ENCODE measurements at regions of chrX and their contacts with region 1.

Region 1: GRCh38 chrX:153927922-153928760 is 2.1 kb upstream of the ARHGAP4 start:
- DNase-seq: peak; percentile 80 to 98 (median 94)
- ATAC-seq: peak; percentile 86
- H3K4me3 ChIP-seq: peak overlapping the region; percentile 81
- H3K4me3 Mint-ChIP-seq: peak overlapping the region; percentile 90 to 98 (median 94)
- H3K27ac ChIP-seq: peak overlapping the region; percentile 98
- H3K27ac Mint-ChIP-seq: peak overlapping the region; percentile 80 to 100 (median 98)
- H3K4me1 ChIP-seq: peaks cover 14 to 18% of the 10 kb centered on the region in 2 donors
- H3K4me1 Mint-ChIP-seq: peaks cover 0 to 68% (median 21%) of the 10 kb centered on the region in 7 donors
- H3K27me3 ChIP-seq: no peaks in the 10 kb centered on the region
- H3K27me3 Mint-ChIP-seq: no peaks in the 10 kb centered on the region

Region 2: DNA sequence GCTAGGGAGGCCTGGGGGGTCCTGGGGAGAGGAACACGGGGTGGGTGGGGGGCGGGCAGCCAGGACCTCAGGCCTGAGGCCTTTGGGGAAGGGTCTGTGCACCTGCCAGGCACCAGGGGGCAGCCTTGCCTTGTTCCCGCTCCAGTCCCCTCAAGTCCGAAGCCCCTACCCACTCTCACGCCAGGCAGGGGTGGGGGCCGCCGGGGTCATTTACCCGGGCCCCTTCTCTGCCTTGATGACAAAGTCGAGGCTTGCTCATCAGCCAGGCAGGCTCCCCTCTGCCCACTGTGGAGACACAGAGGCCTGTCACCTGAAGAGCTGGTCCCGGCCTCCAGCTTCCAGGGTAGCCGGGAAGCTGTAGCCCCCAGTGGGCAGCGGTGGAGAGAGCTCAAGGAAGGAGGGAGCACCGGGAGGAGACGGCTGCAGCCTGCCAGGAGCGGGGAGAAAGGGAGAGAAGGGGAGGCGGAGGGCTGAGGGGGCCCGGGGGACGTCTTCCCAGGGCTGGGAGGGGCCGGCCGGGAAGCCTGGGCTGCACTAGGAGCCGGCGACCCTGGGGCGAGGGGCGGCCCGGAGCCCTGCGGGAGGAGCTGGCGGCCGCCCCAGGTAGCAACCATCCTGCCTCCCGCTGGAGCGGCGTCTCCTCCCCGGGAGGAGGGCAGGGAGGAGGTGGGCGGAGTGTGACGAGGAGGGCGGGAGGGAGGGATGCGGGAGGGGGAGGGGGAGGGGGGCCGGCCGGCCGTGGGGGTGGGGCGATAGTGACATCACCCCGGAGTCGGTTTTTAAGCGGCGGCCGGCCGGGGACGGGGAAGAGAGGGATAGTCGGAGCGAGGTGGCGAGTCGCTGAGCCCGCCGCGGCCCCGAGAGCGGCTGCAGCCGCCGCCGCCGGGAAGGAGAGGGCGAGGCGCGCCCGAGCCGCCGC is 240.8 kb before region 1 on chrX and contains the start of gene SLC6A8:
- CTCF ChIA-PET with region 1: no interaction called
- POLR2A ChIA-PET with region 1: no interaction called
- intact Hi-C with region 1: loop called in 1 of 2 experiments (anchors 5 kb)
- DNase-seq: peak in 4 of 9 donors; percentile 17 to 56 (median 33)
- ATAC-seq: peak; percentile 51
- H3K4me3 ChIP-seq: no peak within 1 kb of the TSS
- H3K4me3 Mint-ChIP-seq: peak within 1 kb of the TSS; percentile 49 to 84 (median 75)
- H3K27ac ChIP-seq: no peak within 1 kb of the TSS
- H3K27ac Mint-ChIP-seq: peak within 1 kb of the TSS in 1 of 9 donors; percentile 3
- H3K4me1 ChIP-seq: no peaks in the 10 kb centered on the region
- H3K4me1 Mint-ChIP-seq: peaks cover 0 to 4% (median 0%) of the 10 kb centered on the region in 7 donors
- H3K27me3 ChIP-seq: no peaks in the 10 kb centered on the region
- H3K27me3 Mint-ChIP-seq: peaks cover 0 to 26% (median 0%) of the 10 kb centered on the region in 5 donors
- total RNA-seq, gene SLC6A8: 0.14 to 2.6 (median 0.84) TPM

Region 3: DNA sequence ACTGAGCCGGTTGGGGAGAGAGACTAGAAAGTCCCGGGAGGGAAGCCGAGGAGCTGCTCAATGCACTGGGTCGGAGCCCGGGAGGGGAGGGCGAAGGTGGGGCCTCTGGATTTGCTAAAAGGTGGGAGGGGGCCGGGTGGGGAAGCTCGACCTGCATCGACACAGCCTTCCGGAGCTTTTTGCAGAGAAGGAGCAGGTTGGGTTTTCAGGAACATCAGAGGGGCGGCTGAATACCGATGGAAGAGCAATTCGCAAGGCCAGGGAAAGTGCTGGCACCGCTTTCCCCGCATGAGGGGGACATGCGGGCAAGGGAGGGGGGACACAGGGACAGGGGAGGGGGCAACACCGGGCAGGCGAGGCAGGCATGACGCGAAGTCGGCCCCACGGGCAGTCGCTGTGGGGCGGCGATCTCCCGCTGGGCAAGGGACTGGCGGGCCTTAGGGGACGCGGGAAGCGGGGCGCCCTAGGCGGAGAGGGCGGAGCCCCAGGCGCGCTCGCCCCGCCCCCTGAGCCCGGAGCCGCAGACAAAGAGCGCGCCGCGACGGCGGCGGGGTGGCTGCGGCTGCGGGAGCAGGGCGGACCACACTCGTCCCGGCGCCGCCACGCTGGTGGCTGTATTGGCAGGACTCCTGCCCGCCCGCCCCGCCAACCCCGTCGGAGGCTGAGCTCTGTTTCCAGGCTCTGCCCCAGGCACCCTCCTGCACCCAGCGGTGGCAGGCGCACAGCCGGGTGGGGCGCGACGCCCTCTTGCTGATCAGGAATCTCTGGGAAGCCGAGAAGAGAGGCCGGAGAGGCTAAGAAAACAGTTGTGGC is 109.4 kb before region 1 on chrX:
- CTCF ChIA-PET with region 1: interaction called, 3 read pairs
- POLR2A ChIA-PET with region 1: interaction called, 6 read pairs
- intact Hi-C with region 1: loop called in 1 of 2 experiments (anchors 2 kb)
- DNase-seq: peak; percentile 25 to 71 (median 49)
- ATAC-seq: peak; percentile 76
- H3K4me3 ChIP-seq: peak overlapping the region; percentile 33
- H3K4me3 Mint-ChIP-seq: peak overlapping the region in 9 of 10 donors; percentile 48 to 69 (median 57)
- H3K27ac ChIP-seq: peak overlapping the region; percentile 51
- H3K27ac Mint-ChIP-seq: peak overlapping the region in 2 of 9 donors; percentile 55 to 87
- H3K4me1 ChIP-seq: peaks cover 39 to 44% of the 10 kb centered on the region in 2 donors
- H3K4me1 Mint-ChIP-seq: peaks cover 18 to 61% (median 40%) of the 10 kb centered on the region in 7 donors
- H3K27me3 ChIP-seq: no peaks in the 10 kb centered on the region
- H3K27me3 Mint-ChIP-seq: peaks cover 0 to 20% (median 0%) of the 10 kb centered on the region in 5 donors

Region 4: DNA sequence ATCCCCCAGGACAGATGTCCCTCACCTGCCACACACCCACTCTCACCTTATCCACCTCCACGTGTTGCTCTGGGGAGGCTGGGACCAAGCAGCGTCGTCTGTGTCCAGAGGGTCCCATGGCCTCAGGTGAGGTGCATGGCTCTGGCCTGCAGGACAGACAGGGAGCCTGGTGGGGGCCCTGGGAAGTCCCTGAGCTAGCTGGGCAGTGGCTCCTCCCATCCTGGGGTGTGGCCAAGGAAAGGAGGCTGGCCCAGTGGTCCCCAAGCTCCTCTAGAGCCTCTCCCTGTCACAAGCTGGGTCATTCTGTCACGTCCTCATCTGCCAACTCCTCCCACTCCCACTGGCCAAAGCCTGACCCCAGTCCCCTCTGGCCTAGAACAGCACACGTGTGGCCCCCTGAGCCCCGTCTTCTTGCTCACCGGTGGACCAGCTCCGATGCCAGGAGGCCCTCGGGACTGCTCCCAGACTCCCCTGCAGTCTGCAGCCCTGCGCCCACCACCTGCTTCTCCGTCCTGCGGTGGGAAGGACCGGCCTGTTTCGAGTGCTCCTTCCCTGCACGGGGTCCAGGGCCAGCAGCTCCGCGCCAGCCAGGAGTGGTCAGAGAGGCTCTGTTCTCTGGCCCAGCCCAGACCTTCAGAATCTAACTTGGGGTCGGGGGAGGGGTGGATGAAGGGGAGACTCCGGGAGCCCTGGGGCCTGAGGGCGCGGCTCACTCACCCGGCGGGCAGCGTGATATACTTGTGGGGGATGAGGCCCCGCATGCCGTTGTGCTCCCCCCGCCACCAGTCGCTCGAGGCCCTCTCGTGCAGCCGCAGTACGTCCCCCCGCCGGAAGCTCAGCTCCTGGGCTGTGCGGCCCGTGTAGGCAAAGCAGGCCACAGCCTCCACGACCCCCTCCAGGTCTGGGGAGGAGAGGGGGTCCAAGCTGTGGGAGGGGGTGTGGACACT is 18.8 kb before region 1 on chrX:
- CTCF ChIA-PET with region 1: interaction called, 4 read pairs
- POLR2A ChIA-PET with region 1: interaction called, 111 read pairs
- intact Hi-C with region 1: loop called in 1 of 2 experiments (anchors 2 kb)
- DNase-seq: no peak
- ATAC-seq: no peak
- H3K4me3 ChIP-seq: no peak overlapping the region
- H3K4me3 Mint-ChIP-seq: no peak overlapping the region
- H3K27ac ChIP-seq: peak overlapping the region; percentile 35
- H3K27ac Mint-ChIP-seq: peak overlapping the region in 1 of 9 donors; percentile 17
- H3K4me1 ChIP-seq: peaks cover 11 to 12% of the 10 kb centered on the region in 2 donors
- H3K4me1 Mint-ChIP-seq: peaks cover 0 to 21% (median 11%) of the 10 kb centered on the region in 7 donors
- H3K27me3 ChIP-seq: no peaks in the 10 kb centered on the region
- H3K27me3 Mint-ChIP-seq: no peaks in the 10 kb centered on the region

Region 5: GRCh38 chrX:153953342-153953830 is 25.2 kb after region 1 on chrX:
- CTCF ChIA-PET with region 1: interaction called, 168 read pairs
- POLR2A ChIA-PET with region 1: interaction called, 384 read pairs
- intact Hi-C with region 1: loop called (anchors 1 to 2 kb)
- DNase-seq: peak; percentile 61 to 87 (median 78)
- ATAC-seq: peak; percentile 89
- H3K4me3 ChIP-seq: no peak overlapping the region
- H3K4me3 Mint-ChIP-seq: no peak overlapping the region
- H3K27ac ChIP-seq: no peak overlapping the region
- H3K27ac Mint-ChIP-seq: peak overlapping the region in 6 of 9 donors; percentile 4 to 82 (median 52)
- H3K4me1 ChIP-seq: peaks cover 4 to 6% of the 10 kb centered on the region in 2 donors
- H3K4me1 Mint-ChIP-seq: peaks cover 0 to 22% (median 7%) of the 10 kb centered on the region in 7 donors
- H3K27me3 ChIP-seq: no peaks in the 10 kb centered on the region
- H3K27me3 Mint-ChIP-seq: no peaks in the 10 kb centered on the region

Region 6: GRCh38 chrX:154002215-154002719 is 74.1 kb after region 1 on chrX:
- CTCF ChIA-PET with region 1: no interaction called
- POLR2A ChIA-PET with region 1: no interaction called
- intact Hi-C with region 1: no loop called
- DNase-seq: peak in 1 of 9 donors; percentile 23
- ATAC-seq: peak; percentile 93
- H3K4me3 ChIP-seq: peak overlapping the region; percentile 51
- H3K4me3 Mint-ChIP-seq: peak overlapping the region; percentile 66 to 82 (median 75)
- H3K27ac ChIP-seq: no peak overlapping the region
- H3K27ac Mint-ChIP-seq: peak overlapping the region in 7 of 9 donors; percentile 36 to 89 (median 57)
- H3K4me1 ChIP-seq: peaks cover 0 to 4% of the 10 kb centered on the region in 2 donors
- H3K4me1 Mint-ChIP-seq: peaks cover 0 to 20% (median 15%) of the 10 kb centered on the region in 7 donors
- H3K27me3 ChIP-seq: no peaks in the 10 kb centered on the region
- H3K27me3 Mint-ChIP-seq: no peaks in the 10 kb centered on the region

Region 7: DNA sequence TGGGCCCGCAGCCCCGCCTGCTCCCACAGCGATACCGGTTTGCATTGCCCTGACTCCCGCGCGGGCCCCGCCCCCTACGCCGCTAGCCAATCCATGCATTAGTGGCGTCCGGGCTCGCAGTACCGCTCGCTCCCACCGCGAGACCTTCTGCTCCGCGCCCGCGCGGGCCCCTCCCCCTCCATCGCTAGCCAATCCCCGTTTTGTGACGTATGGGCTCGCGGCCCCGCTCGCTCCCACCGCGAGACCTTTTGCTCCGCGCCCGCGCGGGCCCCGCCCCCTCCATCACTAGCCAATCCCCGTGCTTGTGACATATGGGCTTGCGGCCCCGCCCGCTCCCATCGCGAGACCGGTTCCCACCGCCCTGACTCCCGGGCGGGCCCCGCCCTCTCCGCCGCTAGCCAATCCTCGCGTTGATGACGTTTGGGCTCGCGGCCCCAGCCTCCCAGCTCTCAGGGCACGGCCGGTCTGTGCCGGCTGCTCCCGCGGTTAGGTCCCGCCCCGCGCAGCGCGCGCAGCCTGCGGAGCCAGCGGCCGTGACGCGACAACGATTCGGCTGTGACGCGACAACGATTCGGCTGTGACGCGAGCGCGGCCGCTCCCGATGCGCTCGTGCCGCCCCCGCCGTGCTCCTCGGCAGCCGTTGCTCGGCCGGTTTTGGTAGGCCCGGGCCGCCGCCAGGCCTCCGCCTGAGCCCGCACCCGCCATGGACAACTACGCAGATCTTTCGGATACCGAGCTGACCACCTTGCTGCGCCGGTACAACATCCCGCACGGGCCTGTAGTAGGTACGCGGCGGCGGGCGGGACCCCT is 450.8 kb after region 1 on chrX and contains the start of gene EMD:
- CTCF ChIA-PET with region 1: no interaction called
- POLR2A ChIA-PET with region 1: interaction called, 6 read pairs
- intact Hi-C with region 1: loop called (anchors 5 kb)
- DNase-seq: peak; percentile 88 to 98 (median 96)
- ATAC-seq: peak; percentile 87
- H3K4me3 ChIP-seq: peak within 1 kb of the TSS; percentile 68
- H3K4me3 Mint-ChIP-seq: peak within 1 kb of the TSS; percentile 73 to 88 (median 84)
- H3K27ac ChIP-seq: peak within 1 kb of the TSS; percentile 99
- H3K27ac Mint-ChIP-seq: peak within 1 kb of the TSS; percentile 72 to 95 (median 92)
- H3K4me1 ChIP-seq: peaks cover 10 to 18% of the 10 kb centered on the region in 2 donors
- H3K4me1 Mint-ChIP-seq: peaks cover 4 to 21% (median 12%) of the 10 kb centered on the region in 7 donors
- H3K27me3 ChIP-seq: no peaks in the 10 kb centered on the region
- H3K27me3 Mint-ChIP-seq: no peaks in the 10 kb centered on the region
- total RNA-seq, gene EMD: 53.5 to 141 (median 89.9) TPM

Region 8: GRCh38 chrX:154471839-154472687 is 543.9 kb after region 1 on chrX:
- CTCF ChIA-PET with region 1: no interaction called
- POLR2A ChIA-PET with region 1: no interaction called
- intact Hi-C with region 1: no loop called
- DNase-seq: no peak
- ATAC-seq: no peak
- H3K4me3 ChIP-seq: no peak overlapping the region
- H3K4me3 Mint-ChIP-seq: no peak overlapping the region
- H3K27ac ChIP-seq: no peak overlapping the region
- H3K27ac Mint-ChIP-seq: peak overlapping the region in 1 of 9 donors; percentile 51
- H3K4me1 ChIP-seq: peaks cover 0 to 3% of the 10 kb centered on the region in 2 donors
- H3K4me1 Mint-ChIP-seq: peaks cover 2 to 13% (median 11%) of the 10 kb centered on the region in 7 donors
- H3K27me3 ChIP-seq: no peaks in the 10 kb centered on the region
- H3K27me3 Mint-ChIP-seq: no peaks in the 10 kb centered on the region

Region 9: GRCh38 chrX:154547245-154548027 is 619.3 kb after region 1 on chrX and contains the start of gene IKBKG:
- CTCF ChIA-PET with region 1: no interaction called
- POLR2A ChIA-PET with region 1: no interaction called
- intact Hi-C with region 1: loop called in 1 of 2 experiments (anchors 1 kb)
- DNase-seq: peak; percentile 83 to 92 (median 91)
- ATAC-seq: peak; percentile 89
- H3K4me3 ChIP-seq: peak within 1 kb of the TSS; percentile 75
- H3K4me3 Mint-ChIP-seq: peak within 1 kb of the TSS; percentile 84 to 98 (median 90)
- H3K27ac ChIP-seq: peak within 1 kb of the TSS; percentile 93
- H3K27ac Mint-ChIP-seq: peak within 1 kb of the TSS; percentile 88 to 97 (median 93)
- H3K4me1 ChIP-seq: peaks cover 25 to 44% of the 10 kb centered on the region in 2 donors
- H3K4me1 Mint-ChIP-seq: peaks cover 24 to 58% (median 42%) of the 10 kb centered on the region in 7 donors
- H3K27me3 ChIP-seq: no peaks in the 10 kb centered on the region
- H3K27me3 Mint-ChIP-seq: no peaks in the 10 kb centered on the region
- total RNA-seq, gene IKBKG: 29.6 to 45.5 (median 38.8) TPM

Measured in naive thymus-derived CD4-positive, alpha-beta T cell (primary cell).